ENCODE measurements at regions of chr2 and their contacts with region 1.

Region 1: DNA sequence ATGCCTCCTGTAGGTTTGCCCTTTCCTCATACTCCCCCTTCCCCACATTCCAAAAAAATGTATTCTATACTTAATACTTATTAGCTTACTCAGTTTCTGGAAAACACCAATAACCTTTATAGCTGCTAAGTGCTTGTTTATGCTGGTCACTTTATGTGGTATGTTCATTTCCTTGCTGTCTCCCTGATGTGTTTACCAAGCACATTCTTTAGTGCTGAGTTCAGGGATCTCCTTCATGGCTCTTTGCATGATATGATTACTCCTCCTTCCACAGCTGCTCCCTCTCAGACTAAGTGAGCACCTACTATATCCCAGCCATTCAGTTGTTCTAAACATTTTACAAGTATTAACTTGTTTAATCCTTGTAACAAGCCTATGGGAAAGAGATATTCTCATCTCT is 698.3 kb upstream of the FANCL start:
- DNase-seq: no peak
- H3K4me3 ChIP-seq: no peak overlapping the region
- H3K27ac ChIP-seq: no peak overlapping the region
- H3K4me1 ChIP-seq: no peaks in the 10 kb centered on the region
- H3K27me3 ChIP-seq: no peaks in the 10 kb centered on the region
- CTCF ChIP-seq: no peak
- POLR2A ChIP-seq: no peak

Region 2: GRCh38 chr2:57656198-57656597 is 1283.2 kb before region 1 on chr2:
- intact Hi-C with region 1: loop called (anchors 5 kb)
- DNase-seq: no peak
- H3K4me3 ChIP-seq: no peak overlapping the region
- H3K27ac ChIP-seq: no peak overlapping the region
- H3K4me1 ChIP-seq: no peaks in the 10 kb centered on the region
- H3K27me3 ChIP-seq: no peaks in the 10 kb centered on the region
- CTCF ChIP-seq: no peak
- POLR2A ChIP-seq: no peak

Measured in vagina (tissue), 2 donors.